Common myeloid progenitor, CD34-positive (primary cell): ENCODE measurements at regions of chr14 and their contacts with region 1.

Region 1: DNA sequence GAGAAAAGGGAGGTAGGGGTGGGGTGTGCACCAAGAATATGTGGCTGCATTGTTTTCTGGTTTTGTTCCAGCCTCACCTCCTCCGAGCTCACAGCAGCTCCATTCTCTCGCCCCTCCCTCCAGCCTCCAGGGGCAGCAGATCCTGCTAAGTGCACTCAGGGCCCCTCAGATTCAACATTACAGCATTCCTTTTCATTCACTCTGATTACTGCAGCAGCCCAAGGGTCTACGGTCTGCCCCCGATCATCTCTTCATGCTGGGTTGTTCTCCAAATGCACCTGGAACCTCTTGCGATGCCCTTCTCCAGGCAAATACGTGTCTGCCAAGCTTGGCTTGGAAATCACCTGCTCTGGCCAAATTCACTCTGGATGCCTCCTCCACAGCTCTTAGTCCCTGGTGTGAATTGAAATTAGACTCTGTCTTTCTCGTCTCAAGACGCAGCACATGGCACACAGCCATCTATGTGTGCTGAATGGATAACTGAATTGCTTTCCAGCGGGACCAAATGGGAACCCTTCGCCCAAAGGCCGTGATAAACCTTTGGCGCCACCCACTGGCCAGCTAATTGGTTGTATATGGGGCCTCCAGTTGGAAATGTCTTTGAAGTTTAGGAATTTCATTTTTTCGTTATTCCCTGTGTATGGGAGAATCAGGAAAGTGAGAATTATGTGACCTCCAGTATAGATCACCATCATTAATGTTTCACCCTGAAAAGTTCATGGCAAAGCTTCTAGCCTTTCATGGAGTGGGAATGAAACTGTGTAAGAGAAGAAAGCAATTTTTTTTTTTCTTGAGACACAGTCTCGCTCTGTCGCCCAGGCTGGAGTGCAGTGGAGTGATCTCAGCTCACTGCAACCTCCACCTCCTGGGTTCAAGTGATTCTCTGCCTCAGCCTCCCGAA is 9.6 kb upstream of the HSP90AA1 start:
- DNase-seq: peak; percentile 42 to 63 (median 54)
- H3K4me3 ChIP-seq: no peak overlapping the region
- H3K27ac ChIP-seq: no peak overlapping the region
- H3K4me1 ChIP-seq: no peaks in the 10 kb centered on the region
- H3K27me3 ChIP-seq: peaks cover 0 to 1% (median 0%) of the 10 kb centered on the region in 5 experiments

Region 2: GRCh38 chr14:102046343-102047278 is 49.9 kb before region 1 on chr14:
- CTCF ChIA-PET with region 1: interaction called, 14 read pairs
- POLR2A ChIA-PET with region 1: no interaction called
- DNase-seq: peak; percentile 50 to 66 (median 62)
- H3K4me3 ChIP-seq: no peak overlapping the region
- H3K27ac ChIP-seq: no peak overlapping the region
- H3K4me1 ChIP-seq: no peaks in the 10 kb centered on the region
- H3K27me3 ChIP-seq: no peaks in the 10 kb centered on the region

Region 3: GRCh38 chr14:102063091-102063802 is 33.2 kb before region 1 on chr14:
- CTCF ChIA-PET with region 1: interaction called, 90 read pairs
- POLR2A ChIA-PET with region 1: interaction called, 4 read pairs
- DNase-seq: peak; percentile 91 to 94 (median 92)
- H3K4me3 ChIP-seq: no peak overlapping the region
- H3K27ac ChIP-seq: no peak overlapping the region
- H3K4me1 ChIP-seq: no peaks in the 10 kb centered on the region
- H3K27me3 ChIP-seq: no peaks in the 10 kb centered on the region

Region 4: GRCh38 chr14:102351026-102351425 is 254.6 kb after region 1 on chr14:
- CTCF ChIA-PET with region 1: no interaction called
- POLR2A ChIA-PET with region 1: no interaction called
- DNase-seq: no peak
- H3K4me3 ChIP-seq: no peak overlapping the region
- H3K27ac ChIP-seq: no peak overlapping the region
- H3K4me1 ChIP-seq: no peaks in the 10 kb centered on the region
- H3K27me3 ChIP-seq: no peaks in the 10 kb centered on the region